Posterior cingulate gyrus (tissue), 11 donors: ENCODE measurements at regions of chr20 and their contacts with region 1.

Region 1: DNA sequence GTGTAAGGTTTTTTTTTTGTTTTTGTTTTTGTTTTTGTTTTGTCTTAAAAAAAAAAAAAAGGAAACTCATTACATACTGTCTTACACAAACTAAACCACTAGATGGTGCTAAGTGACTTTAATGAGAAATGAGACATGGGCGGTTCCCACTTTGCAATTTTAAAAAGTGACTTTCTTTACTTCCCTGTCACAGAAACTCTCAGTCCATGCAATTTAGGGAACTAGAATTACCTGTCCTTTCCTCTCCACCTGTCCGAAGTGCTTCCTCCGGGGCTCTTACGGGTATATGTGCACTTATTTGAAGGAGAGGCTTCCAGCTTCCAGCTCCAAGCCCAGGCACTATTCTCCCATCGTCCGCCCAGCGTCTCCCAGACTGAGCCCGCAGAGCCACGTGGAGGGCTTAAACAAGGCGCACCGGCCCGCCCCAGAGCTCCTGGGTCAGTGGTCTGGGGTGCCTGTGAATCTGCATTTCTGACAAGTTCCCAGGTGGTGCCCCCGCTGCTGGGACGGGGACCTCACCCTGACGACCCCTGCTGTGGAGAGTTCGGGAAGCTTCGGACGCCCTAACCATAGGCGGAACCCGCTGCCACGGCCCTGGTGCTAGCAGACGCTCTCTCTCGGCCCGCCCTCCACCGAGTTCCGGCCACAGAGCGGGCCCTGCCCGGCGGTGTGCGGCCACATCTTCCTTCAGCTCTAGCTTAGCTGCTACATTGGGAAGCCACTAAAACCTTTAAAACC is 26.1 kb downstream of the BFSP1 start:
- DNase-seq: peak in 2 of 10 donors; percentile 20 to 26

Region 2: DNA sequence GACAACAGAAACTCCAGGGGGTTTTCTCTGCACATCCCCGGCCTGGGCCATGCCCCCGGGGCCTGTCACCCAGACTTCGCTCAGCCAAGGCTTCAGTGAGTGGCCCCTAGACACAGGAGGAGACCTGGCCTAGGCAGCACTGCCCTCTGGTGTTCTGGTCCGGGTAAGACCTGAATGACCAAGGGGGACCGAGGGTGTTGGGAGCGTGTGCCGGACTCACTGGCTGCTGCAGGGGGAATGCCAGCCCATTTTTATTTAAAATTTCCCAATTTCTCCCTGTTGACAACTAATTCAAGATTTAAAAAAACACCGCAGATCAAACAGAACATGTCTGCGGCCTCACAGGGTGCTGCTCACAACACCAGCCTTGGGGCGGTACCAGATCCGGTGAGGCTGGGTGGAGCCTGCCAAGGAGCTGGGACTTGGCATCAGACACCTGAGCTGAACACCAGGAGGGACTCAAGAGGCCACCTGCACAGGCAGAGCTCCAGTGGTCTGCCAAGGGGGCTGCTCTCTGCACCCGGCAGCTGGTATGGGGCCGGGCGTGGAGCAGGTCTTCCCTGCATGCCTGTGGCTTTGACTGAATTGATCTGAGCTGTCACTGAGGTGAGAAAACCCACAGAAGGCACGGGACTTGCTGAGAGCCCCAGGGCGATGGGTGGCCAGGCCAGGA is 112.6 kb after region 1 on chr20:
- intact Hi-C with region 1: loop called (anchors 1 kb)
- DNase-seq: peak in 8 of 10 donors; percentile 66 to 95 (median 72)

Region 3: DNA sequence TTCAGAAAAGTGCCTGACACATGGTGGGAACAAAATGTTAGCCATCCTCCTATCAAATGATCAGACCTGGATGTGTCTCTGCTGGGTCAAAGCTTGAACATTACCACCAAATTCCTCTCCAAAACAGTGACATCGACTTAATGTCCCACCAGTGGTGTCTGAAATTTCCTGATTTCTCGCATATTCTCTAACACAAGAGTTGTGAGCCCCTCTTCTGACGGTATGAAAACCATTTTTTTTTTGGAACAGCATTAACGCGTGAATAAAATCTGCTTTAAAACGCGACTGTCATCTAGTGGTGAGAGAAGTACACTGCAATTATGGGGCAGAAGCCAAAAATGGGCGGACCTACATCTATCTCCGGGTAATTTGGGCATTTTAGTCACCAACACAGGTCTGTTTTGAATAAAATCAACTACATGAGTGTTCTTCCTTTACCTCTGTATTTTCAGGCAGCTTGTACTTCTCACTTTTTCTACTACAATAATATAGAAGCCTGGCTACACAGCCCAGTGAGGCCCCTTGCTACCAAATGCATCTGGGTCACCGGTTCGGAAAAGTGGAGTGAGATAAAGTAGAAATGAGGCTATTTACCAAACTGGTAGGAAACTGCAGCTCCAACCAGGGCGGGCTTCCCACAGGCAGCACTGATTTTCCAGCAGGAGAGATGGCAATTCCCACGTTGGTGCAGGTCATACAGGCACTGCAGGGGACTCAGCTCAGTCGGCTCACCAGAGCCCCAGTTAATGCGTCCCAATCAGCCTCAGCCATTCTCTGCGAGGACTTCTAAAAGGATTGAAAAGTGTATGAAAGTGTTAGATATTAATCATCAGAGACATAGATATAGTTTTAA is 491.1 kb after region 1 on chr20:
- intact Hi-C with region 1: loop called (anchors 10 kb)
- DNase-seq: peak in 2 of 10 donors; percentile 29 to 80

Region 4: GRCh38 chr20:18276821-18277220 is 771.8 kb after region 1 on chr20:
- intact Hi-C with region 1: loop called (anchors 10 kb)
- DNase-seq: peak; percentile 47 to 96 (median 75)